ENCODE measurements at regions of chr11 and their contacts with region 1.

Region 1: GRCh38 chr11:48001438-48002021 is 21.2 kb downstream of the PTPRJ start:
- DNase-seq: peak; percentile 95
- ATAC-seq: peak; percentile 95
- H3K4me3 Mint-ChIP-seq: peak overlapping the region; percentile 52
- H3K27ac Mint-ChIP-seq: peak overlapping the region; percentile 97
- H3K4me1 Mint-ChIP-seq: peaks cover 91% of the 10 kb centered on the region
- H3K27me3 Mint-ChIP-seq: no peaks in the 10 kb centered on the region

Region 2: GRCh38 chr11:47981050-47981621 is 20.4 kb before region 1 on chr11:
- CTCF ChIA-PET with region 1: interaction called, 26 read pairs
- POLR2A ChIA-PET with region 1: interaction called, 13 read pairs
- DNase-seq: no peak
- ATAC-seq: peak; percentile 54
- H3K4me3 Mint-ChIP-seq: peak overlapping the region; percentile 98
- H3K27ac Mint-ChIP-seq: no peak overlapping the region
- H3K4me1 Mint-ChIP-seq: peaks cover 33% of the 10 kb centered on the region
- H3K27me3 Mint-ChIP-seq: peaks cover 18% of the 10 kb centered on the region

Region 3: DNA sequence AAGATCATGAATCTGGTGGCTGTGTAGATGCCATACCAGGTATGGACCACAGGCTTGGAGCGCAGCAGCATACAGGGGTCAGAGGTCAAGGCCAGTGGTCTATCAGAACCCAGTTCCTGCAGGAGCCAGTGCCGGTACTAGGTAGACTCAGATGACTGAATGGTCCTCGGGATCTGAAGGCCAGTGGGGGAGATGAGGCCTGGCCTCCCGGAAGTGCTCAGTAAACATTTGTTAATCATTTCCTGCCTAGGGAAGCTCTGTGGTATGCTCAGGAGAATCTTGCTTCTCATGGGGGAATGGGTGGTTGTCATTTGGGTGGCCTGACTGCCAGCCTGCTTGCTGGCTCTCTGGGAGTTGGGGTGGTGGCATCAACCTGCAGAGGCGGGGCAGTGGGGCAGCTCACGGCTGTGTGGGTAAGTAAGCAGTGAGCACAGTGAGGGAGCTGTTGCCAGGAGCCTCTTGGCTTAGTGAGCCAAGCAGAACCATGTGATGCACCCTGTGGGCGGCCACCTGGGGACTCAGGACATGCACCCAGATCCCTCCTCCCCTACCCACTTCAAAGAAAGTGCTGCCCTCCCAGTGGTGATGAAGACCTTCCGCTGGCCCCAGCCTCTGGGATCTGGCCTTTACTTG is 11.9 kb after region 1 on chr11:
- CTCF ChIA-PET with region 1: interaction called, 27 read pairs
- POLR2A ChIA-PET with region 1: interaction called, 35 read pairs
- DNase-seq: peak; percentile 66
- ATAC-seq: peak; percentile 57
- H3K4me3 Mint-ChIP-seq: peak overlapping the region; percentile 36
- H3K27ac Mint-ChIP-seq: peak overlapping the region; percentile 94
- H3K4me1 Mint-ChIP-seq: peaks cover 87% of the 10 kb centered on the region
- H3K27me3 Mint-ChIP-seq: no peaks in the 10 kb centered on the region

Region 4: DNA sequence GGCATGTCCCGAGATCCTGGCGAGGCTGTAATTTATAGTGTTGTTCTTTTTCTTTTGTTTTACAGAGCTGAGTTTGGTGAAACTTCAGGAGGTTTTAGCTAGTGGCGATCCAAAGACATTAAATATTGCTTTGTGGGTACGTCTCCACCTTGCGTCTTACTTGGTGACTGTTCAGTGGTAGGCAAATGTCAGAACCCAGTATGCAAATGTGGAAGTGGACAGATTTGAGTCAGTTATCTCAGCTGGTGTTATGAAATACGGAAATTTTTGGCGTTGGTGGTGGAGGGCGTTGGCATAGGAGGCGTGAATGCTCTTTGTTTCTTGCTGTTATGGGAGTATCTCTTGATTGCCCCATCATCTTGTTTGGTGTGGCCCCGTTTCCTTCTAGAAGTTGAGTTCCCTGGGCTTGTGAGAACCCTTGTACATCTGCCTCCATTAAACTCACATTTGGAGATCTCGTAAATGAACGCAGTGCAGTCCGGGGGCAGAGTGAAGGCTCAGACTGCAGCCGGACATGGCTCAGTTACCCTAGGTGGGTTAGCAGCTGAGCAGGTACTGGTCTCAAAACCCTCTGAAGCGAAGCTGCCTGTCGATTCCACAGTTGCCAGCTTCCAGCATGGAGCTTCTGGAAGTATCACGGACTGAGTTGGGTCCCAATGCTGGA is 18.7 kb after region 1 on chr11:
- CTCF ChIA-PET with region 1: interaction called, 8 read pairs
- POLR2A ChIA-PET with region 1: interaction called, 35 read pairs
- DNase-seq: no peak
- ATAC-seq: no peak
- H3K4me3 Mint-ChIP-seq: no peak overlapping the region
- H3K27ac Mint-ChIP-seq: peak overlapping the region; percentile 0
- H3K4me1 Mint-ChIP-seq: peaks cover 73% of the 10 kb centered on the region
- H3K27me3 Mint-ChIP-seq: no peaks in the 10 kb centered on the region

Region 5: GRCh38 chr11:48034926-48035871 is 33.7 kb after region 1 on chr11:
- CTCF ChIA-PET with region 1: no interaction called
- POLR2A ChIA-PET with region 1: no interaction called
- DNase-seq: no peak
- ATAC-seq: peak; percentile 45
- H3K4me3 Mint-ChIP-seq: no peak overlapping the region
- H3K27ac Mint-ChIP-seq: peak overlapping the region; percentile 50
- H3K4me1 Mint-ChIP-seq: peaks cover 66% of the 10 kb centered on the region
- H3K27me3 Mint-ChIP-seq: no peaks in the 10 kb centered on the region

Measured in activated CD8-positive, alpha-beta T cell treated with anti-CD3 and anti-CD28 coated beads, Interleukin-2, amount 10 ng/mL, durations not matched to agents 7 days and 5 days (primary cell).